Mammary epithelial cell (primary cell): ENCODE measurements at regions of chr6 and their contacts with region 1.

Region 1: DNA sequence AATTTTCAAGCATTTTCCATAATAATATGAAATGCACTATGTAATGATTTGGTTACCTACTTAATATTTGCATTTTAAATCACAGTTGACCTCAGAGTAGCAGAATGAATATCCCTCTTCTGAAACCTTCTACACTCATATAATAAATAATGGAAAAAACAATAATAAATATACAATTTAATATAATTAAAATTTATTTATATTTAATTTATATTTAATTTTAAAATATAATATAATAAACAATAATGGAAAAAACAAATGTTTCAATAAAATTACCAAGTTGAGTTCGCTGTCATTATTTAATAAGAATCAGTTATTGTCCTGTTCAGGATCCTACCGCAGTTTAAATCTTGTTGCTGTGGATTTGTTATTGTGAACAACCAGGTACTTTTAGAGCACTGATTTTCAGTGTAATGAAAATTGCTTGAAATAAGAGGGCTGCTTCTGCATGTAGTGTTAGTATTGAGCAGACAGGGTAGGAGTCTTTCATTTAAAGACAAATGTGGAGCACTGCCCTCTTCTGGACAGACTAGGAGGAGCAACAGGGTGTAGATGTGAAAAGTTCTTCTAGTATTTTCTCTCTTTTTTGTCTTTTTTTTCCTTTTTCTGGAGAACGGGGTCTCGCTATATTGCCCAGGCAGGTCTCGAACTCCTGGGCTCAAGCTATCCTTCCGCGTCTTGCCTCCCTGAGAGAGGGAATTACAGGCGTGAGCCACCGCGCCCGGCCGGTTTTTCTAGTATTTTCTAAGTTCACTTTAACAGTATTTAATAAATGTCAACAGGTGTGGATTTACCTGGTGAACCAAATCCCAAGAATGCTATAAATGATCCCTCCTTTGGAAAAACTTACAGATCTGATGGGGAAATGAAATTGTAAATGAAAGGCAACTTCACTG is 13.6 kb downstream of the TRAPPC3L start:
- DNase-seq: peak; percentile 42
- H3K4me3 ChIP-seq: no peak overlapping the region
- H3K27ac ChIP-seq: no peak overlapping the region
- H3K4me1 ChIP-seq: peaks cover 27% of the 10 kb centered on the region
- H3K27me3 ChIP-seq: no peaks in the 10 kb centered on the region
- CTCF ChIP-seq: peak; percentile 68 to 72

Region 2: GRCh38 chr6:116217069-116217468 is 314.9 kb before region 1 on chr6:
- CTCF ChIA-PET with region 1: no interaction called
- dilution Hi-C with region 1: no loop called
- in situ Hi-C with region 1: no loop called
- intact Hi-C with region 1: loop called (anchors 2 kb)
- DNase-seq: peak; percentile 29
- H3K4me3 ChIP-seq: no peak overlapping the region
- H3K27ac ChIP-seq: no peak overlapping the region
- H3K4me1 ChIP-seq: no peaks in the 10 kb centered on the region
- H3K27me3 ChIP-seq: no peaks in the 10 kb centered on the region
- CTCF ChIP-seq: peak; percentile 49 to 57

Region 3: DNA sequence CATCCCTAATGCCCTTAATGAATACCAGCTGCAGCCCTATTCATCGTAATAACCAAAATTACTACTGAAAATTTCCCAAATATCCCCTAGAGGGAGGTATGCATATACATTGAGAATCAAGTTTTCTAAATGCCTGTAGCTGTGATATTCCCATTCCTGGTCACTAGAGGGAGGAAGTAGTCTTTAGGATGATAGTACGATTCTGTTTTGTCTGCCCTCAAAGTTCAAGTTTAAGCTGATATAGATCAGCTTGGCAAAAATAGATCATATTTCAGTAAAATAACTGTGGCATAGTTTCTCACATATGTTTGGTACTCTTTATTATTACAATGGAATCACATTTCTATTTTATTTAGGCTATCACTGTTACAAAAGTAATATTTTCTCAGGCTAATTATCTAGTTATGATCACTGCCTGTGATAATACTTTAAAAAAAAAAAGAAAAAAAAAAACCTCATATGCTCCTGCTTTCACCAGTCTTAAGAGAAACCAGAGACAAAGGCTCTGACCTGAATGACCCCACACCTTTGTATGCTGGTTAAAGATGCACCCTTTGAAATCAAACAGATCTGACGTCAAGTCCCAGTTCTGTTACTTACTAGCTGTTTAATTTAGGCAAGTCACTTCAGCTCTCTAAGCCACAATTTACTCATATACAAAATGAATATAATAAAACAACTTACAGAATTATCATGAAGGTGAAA is 263.2 kb before region 1 on chr6:
- CTCF ChIA-PET with region 1: interaction called, 3 read pairs
- dilution Hi-C with region 1: no loop called
- in situ Hi-C with region 1: loop called (anchors 10 kb)
- intact Hi-C with region 1: loop called (anchors 1 kb)
- DNase-seq: peak; percentile 68
- H3K4me3 ChIP-seq: no peak overlapping the region
- H3K27ac ChIP-seq: no peak overlapping the region
- H3K4me1 ChIP-seq: peaks cover 33% of the 10 kb centered on the region
- H3K27me3 ChIP-seq: no peaks in the 10 kb centered on the region
- CTCF ChIP-seq: peak; percentile 93 to 98

Region 4: GRCh38 chr6:116279260-116280063 is 252.5 kb before region 1 on chr6 and contains the start of gene TSPYL1:
- CTCF ChIA-PET with region 1: no interaction called
- dilution Hi-C with region 1: no loop called
- in situ Hi-C with region 1: loop called in 1 of 2 experiments (anchors 10 kb)
- intact Hi-C with region 1: no loop called
- DNase-seq: peak; percentile 96
- H3K4me3 ChIP-seq: peak within 1 kb of the TSS; percentile 67 to 95 (median 76)
- H3K27ac ChIP-seq: peak within 1 kb of the TSS; percentile 95
- H3K4me1 ChIP-seq: peaks cover 11% of the 10 kb centered on the region
- H3K27me3 ChIP-seq: no peaks in the 10 kb centered on the region
- CTCF ChIP-seq: no peak
- total RNA-seq, gene TSPYL1: 103 to 167 TPM

Region 5: DNA sequence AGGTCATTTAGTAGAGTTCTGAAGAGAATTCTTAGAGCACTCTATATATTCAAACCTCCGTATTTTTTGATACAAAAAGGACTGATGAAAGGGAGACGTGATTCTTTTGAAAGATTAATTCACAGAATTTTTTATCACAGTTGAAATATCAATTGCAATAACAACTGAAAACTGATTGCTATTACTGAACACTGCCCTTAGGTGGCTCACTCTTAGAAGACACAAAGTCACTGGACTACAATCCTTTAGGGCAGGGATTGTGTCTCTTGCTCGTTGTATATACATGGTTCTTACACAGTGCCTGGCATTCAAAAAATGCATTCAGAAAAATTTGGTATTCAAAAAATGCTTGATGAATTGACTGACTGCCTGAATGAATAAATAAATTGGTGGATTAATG is 87.8 kb before region 1 on chr6:
- CTCF ChIA-PET with region 1: interaction called, 3 read pairs
- dilution Hi-C with region 1: no loop called
- in situ Hi-C with region 1: loop called in 1 of 2 experiments (anchors 25 kb)
- intact Hi-C with region 1: loop called (anchors 1 kb)
- DNase-seq: peak; percentile 27
- H3K4me3 ChIP-seq: no peak overlapping the region
- H3K27ac ChIP-seq: no peak overlapping the region
- H3K4me1 ChIP-seq: peaks cover 28% of the 10 kb centered on the region
- H3K27me3 ChIP-seq: no peaks in the 10 kb centered on the region
- CTCF ChIP-seq: peak; percentile 47 to 63

Region 6: DNA sequence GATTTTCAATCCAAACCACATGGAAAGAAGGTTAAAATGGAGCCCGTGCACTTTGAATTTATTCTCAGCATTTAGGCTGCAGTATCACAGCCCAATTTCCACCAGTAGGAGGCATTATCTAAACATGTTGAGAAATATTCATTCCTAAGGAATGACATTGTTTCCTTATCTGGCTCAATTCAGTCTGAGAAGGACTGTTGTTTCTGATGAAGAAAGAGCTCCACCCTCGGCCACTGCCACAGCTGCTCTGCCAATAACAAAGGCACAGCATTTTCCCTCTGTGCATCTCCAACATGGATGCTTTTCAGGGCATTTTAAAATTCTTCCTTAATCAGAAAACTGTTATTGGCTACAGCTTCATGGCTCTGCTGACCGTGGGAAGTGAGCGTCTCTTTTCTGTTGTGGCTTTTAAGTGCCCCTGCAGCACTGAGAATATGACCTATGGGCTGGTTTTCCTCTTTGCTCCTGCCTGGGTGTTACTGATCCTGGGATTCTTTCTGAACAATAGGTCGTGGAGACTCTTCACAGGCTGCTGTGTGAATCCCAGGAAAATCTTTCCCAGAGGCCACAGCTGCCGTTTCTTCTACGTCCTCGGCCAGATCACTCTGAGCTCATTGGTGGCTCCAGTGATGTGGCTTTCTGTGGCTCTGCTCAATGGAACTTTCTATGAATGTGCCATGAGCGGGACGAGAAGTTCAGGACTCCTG is 20.4 kb before region 1 on chr6 and contains the start of gene CALHM5:
- CTCF ChIA-PET with region 1: interaction called, 3 read pairs
- dilution Hi-C with region 1: no loop called
- in situ Hi-C with region 1: no loop called
- intact Hi-C with region 1: loop called (anchors 1 kb)
- DNase-seq: peak; percentile 76
- H3K4me3 ChIP-seq: no peak within 1 kb of the TSS
- H3K27ac ChIP-seq: no peak within 1 kb of the TSS
- H3K4me1 ChIP-seq: peaks cover 23% of the 10 kb centered on the region
- H3K27me3 ChIP-seq: no peaks in the 10 kb centered on the region
- CTCF ChIP-seq: peak; percentile 69 to 77
- total RNA-seq, gene CALHM5: 0.05 to 0.50 TPM

Region 7: GRCh38 chr6:116561377-116562018 is 29.6 kb after region 1 on chr6:
- CTCF ChIA-PET with region 1: interaction called, 3 read pairs
- dilution Hi-C with region 1: no loop called
- in situ Hi-C with region 1: no loop called
- intact Hi-C with region 1: loop called (anchors 1 kb)
- DNase-seq: peak; percentile 58
- H3K4me3 ChIP-seq: no peak overlapping the region
- H3K27ac ChIP-seq: no peak overlapping the region
- H3K4me1 ChIP-seq: peaks cover 29% of the 10 kb centered on the region
- H3K27me3 ChIP-seq: no peaks in the 10 kb centered on the region
- CTCF ChIP-seq: peak; percentile 84 to 96